Heart left ventricle (tissue), 16 donors: ENCODE measurements at regions of chr14 and their contacts with region 1.

Region 1: GRCh38 chr14:33950320-33951182 is at the start of gene EGLN3:
- DNase-seq: peak; percentile 92 to 94 (median 93)
- ATAC-seq: peak; percentile 97 to 99 (median 98)
- H3K4me3 ChIP-seq: peak within 1 kb of the TSS; percentile 49 to 87 (median 70)
- H3K27ac ChIP-seq: peak within 1 kb of the TSS; percentile 13 to 91 (median 80)
- H3K4me1 ChIP-seq: peaks cover 0 to 49% (median 16%) of the 10 kb centered on the region in 12 donors
- H3K27me3 ChIP-seq: peaks cover 0 to 23% (median 0%) of the 10 kb centered on the region in 9 donors
- CTCF ChIP-seq: no peak
- POLR2A ChIP-seq: peak; percentile 99 to 100
- total RNA-seq, gene EGLN3: 46.5 to 221 (median 138) TPM

Region 2: GRCh38 chr14:33848706-33849454 is 101.7 kb before region 1 on chr14:
- intact Hi-C with region 1: loop called in 5 of 10 experiments (anchors 2 to 10 kb)
- DNase-seq: peak; percentile 58 to 72 (median 62)
- ATAC-seq: peak; percentile 80 to 96 (median 91)
- H3K4me3 ChIP-seq: no peak overlapping the region
- H3K27ac ChIP-seq: no peak overlapping the region
- H3K4me1 ChIP-seq: peaks cover 0 to 9% (median 0%) of the 10 kb centered on the region in 12 donors
- H3K27me3 ChIP-seq: no peaks in the 10 kb centered on the region
- CTCF ChIP-seq: peak; percentile 57 to 80 (median 72)
- POLR2A ChIP-seq: no peak

Region 3: DNA sequence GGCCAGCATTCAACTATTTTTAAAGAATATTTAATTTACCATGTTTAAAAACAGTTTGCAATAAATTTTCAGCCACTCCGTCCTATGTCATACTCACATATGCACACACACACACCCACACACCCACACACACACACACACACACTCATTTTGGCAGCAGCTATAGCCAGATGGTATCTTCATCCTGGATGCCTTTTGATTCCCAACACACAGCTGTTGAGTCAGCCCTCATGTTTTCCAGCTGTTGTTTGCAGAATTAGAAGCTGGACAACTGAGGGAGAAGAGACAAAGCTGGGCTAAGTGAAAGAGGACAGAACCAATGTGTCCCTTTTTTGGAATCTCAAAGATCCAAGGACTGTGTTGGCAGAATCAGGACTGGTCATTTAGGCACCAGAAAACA is 80.3 kb after region 1 on chr14:
- intact Hi-C with region 1: loop called in 3 of 10 experiments (anchors 5 to 10 kb)
- DNase-seq: peak in 4 of 5 donors; percentile 57 to 68 (median 63)
- ATAC-seq: peak; percentile 28 to 71 (median 54)
- H3K4me3 ChIP-seq: no peak overlapping the region
- H3K27ac ChIP-seq: peak overlapping the region in 11 of 12 donors; percentile 18 to 76 (median 63)
- H3K4me1 ChIP-seq: peaks cover 0 to 40% (median 23%) of the 10 kb centered on the region in 12 donors
- H3K27me3 ChIP-seq: no peaks in the 10 kb centered on the region
- CTCF ChIP-seq: no peak
- POLR2A ChIP-seq: no peak

Region 4: DNA sequence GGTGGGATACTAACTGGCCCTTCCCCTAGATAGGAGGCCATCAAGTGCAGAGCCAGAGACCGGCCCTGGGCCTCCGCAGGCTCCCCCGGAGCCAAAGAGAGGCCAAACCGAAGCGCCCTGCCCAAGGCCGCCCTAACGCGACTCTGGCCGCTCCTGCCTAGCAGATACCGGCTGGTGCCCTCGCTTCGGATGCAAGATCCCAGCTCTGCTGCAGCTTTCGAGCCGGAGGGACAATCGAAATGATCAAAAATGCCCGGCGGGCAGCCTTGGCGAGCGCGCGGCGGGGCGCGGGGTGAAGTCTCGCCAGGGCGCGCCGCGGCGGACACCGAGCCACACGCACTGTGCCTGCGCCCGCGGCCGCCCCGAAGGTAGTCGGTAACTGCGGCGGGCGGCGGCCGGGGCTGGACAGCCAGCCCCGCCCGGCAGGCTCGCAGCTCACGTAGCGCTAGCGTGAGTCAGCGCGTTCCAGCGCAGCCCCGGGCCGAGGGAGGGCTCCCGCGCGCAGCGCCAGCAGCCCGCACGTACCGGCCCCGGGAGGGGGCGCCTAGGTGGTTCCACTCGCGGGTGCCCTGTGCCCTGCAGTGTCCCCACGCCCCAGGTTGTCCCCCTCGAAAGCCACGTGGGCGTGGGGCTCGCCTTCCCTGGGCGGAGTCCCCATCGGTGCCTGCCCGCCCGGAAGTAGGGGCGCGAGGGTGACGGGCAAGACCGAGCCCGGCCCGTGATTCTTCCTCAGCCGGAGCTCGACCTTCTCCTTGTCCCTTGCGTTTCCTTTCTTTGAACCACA is 109.5 kb after region 1 on chr14:
- intact Hi-C with region 1: loop called in 7 of 10 experiments (anchors 1 to 10 kb)
- DNase-seq: peak; percentile 83 to 91 (median 87)
- ATAC-seq: peak; percentile 57 to 96 (median 93)
- H3K4me3 ChIP-seq: peak overlapping the region; percentile 37 to 82 (median 64)
- H3K27ac ChIP-seq: peak overlapping the region; percentile 83 to 98 (median 95)
- H3K4me1 ChIP-seq: peaks cover 0 to 43% (median 29%) of the 10 kb centered on the region in 12 donors
- H3K27me3 ChIP-seq: no peaks in the 10 kb centered on the region
- CTCF ChIP-seq: peak; percentile 6 to 54 (median 38)
- POLR2A ChIP-seq: peak; percentile 24 to 76

Region 5: GRCh38 chr14:34098045-34098984 is 147.8 kb after region 1 on chr14:
- intact Hi-C with region 1: loop called in 1 of 10 experiments (anchors 10 kb)
- DNase-seq: peak in 2 of 5 donors; percentile 27 to 43
- ATAC-seq: peak; percentile 21 to 65 (median 47)
- H3K4me3 ChIP-seq: no peak overlapping the region
- H3K27ac ChIP-seq: peak overlapping the region in 2 of 12 donors; percentile 3 to 13
- H3K4me1 ChIP-seq: peaks cover 0 to 20% (median 2%) of the 10 kb centered on the region in 12 donors
- H3K27me3 ChIP-seq: no peaks in the 10 kb centered on the region
- CTCF ChIP-seq: peak; percentile 28 to 78 (median 63)
- POLR2A ChIP-seq: no peak

Region 6: GRCh38 chr14:34283590-34283989 is 333.0 kb after region 1 on chr14:
- intact Hi-C with region 1: no loop called
- DNase-seq: no peak
- ATAC-seq: no peak
- H3K4me3 ChIP-seq: no peak overlapping the region
- H3K27ac ChIP-seq: no peak overlapping the region
- H3K4me1 ChIP-seq: no peaks in the 10 kb centered on the region
- H3K27me3 ChIP-seq: no peaks in the 10 kb centered on the region
- CTCF ChIP-seq: no peak
- POLR2A ChIP-seq: no peak